ENCODE measurements at regions of chr3 and their contacts with region 1.

Region 1: GRCh38 chr3:8741581-8742261 is 8.1 kb downstream of the CAV3 start:
- DNase-seq: peak; percentile 58
- ATAC-seq: peak; percentile 90
- H3K4me3 Mint-ChIP-seq: peak overlapping the region; percentile 52
- H3K27ac Mint-ChIP-seq: peak overlapping the region; percentile 61; the same call in 1 of the 2 replicates
- H3K4me1 Mint-ChIP-seq: peaks cover 33% of the 10 kb centered on the region
- H3K27me3 Mint-ChIP-seq: peaks cover 13% of the 10 kb centered on the region
- CTCF ChIP-seq: no peak

Region 2: GRCh38 chr3:8020047-8020841 is 721.5 kb before region 1 on chr3:
- CTCF ChIA-PET with region 1: no interaction called
- POLR2A ChIA-PET with region 1: no interaction called
- DNase-seq: no peak
- ATAC-seq: peak; percentile 61
- H3K4me3 Mint-ChIP-seq: no peak overlapping the region
- H3K27ac Mint-ChIP-seq: no peak overlapping the region
- H3K4me1 Mint-ChIP-seq: no peaks in the 10 kb centered on the region
- H3K27me3 Mint-ChIP-seq: peaks cover 4% of the 10 kb centered on the region; the same call in 1 of the 2 replicates
- CTCF ChIP-seq: no peak

Region 3: GRCh38 chr3:8723612-8724011 is 18.1 kb before region 1 on chr3:
- CTCF ChIA-PET with region 1: no interaction called
- POLR2A ChIA-PET with region 1: no interaction called
- DNase-seq: no peak
- ATAC-seq: peak; percentile 92
- H3K4me3 Mint-ChIP-seq: no peak overlapping the region
- H3K27ac Mint-ChIP-seq: no peak overlapping the region
- H3K4me1 Mint-ChIP-seq: peaks cover 27% of the 10 kb centered on the region
- H3K27me3 Mint-ChIP-seq: peaks cover 66% of the 10 kb centered on the region
- CTCF ChIP-seq: no peak

Region 4: DNA sequence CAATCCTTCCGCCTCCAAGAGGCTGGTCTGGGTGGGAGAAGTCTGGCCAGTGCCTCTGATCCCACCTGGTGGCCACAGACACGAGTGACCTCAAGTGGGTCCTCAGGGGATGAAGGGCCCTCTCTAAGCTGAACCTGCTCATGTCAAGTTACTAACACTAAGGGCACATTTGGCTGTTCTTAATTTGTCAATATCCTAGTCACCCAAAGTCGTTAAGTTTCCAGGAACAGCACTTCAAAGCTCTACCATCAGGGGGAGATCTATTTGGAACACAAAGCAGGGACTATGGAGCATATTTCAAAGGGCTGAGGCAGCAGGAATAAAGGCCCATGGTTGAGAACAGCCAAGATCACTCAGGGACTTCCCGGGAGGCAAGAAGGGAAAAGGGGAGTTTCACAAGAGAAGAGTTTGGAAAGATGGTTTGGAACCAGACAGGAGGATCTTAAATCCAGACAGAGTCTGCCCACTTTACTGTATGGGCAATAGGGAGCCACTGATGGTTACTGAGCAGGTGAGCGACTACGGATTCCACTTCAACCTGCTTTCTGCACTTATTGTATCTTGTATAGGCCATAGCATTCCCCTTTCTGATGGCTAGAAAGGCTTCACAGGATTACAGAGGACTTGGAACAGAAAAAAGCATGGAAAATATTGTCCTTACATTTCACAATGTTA is 14.0 kb after region 1 on chr3:
- CTCF ChIA-PET with region 1: interaction called, 10 read pairs
- POLR2A ChIA-PET with region 1: no interaction called
- DNase-seq: no peak
- ATAC-seq: peak; percentile 63
- H3K4me3 Mint-ChIP-seq: no peak overlapping the region
- H3K27ac Mint-ChIP-seq: no peak overlapping the region
- H3K4me1 Mint-ChIP-seq: no peaks in the 10 kb centered on the region; the same call in 1 of the 2 replicates
- H3K27me3 Mint-ChIP-seq: no peaks in the 10 kb centered on the region; the same call in 1 of the 2 replicates
- CTCF ChIP-seq: peak; percentile 14; the same call in 1 of the 2 replicates

Region 5: DNA sequence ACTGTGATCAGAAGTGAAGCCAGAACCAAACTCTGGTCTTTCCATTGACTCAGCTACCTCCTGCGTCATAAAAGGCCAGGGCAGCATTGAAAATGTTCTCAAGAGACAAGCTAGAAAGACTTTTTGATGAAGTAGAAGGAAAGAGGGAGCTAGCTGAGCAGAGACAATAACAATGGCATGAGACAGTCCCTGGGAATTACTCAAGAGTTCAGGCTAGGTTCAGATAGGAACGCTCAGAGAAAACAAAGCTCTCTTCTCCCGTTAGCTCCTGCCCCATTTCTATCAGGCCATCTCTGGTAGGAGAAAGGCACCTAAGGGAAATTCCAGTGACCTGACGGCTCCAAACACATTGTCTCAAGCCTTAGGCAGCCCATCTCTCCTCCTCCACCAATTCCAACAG is 34.7 kb after region 1 on chr3:
- CTCF ChIA-PET with region 1: no interaction called
- POLR2A ChIA-PET with region 1: no interaction called
- DNase-seq: no peak
- ATAC-seq: peak; percentile 24; the same call in 1 of the 2 replicates
- H3K4me3 Mint-ChIP-seq: no peak overlapping the region
- H3K27ac Mint-ChIP-seq: no peak overlapping the region
- H3K4me1 Mint-ChIP-seq: peaks cover 12% of the 10 kb centered on the region
- H3K27me3 Mint-ChIP-seq: peaks cover 3% of the 10 kb centered on the region; the same call in 1 of the 2 replicates
- CTCF ChIP-seq: no peak